Naive thymus-derived CD4-positive, alpha-beta T cell (primary cell): ENCODE measurements at regions of chr2 and their contacts with region 1.

Region 1: GRCh38 chr2:83342860-83343329 is 1116.2 kb downstream of the SUCLG1 start:
- DNase-seq: peak in 6 of 9 donors; percentile 7 to 39 (median 26)
- ATAC-seq: peak; percentile 60
- H3K4me3 ChIP-seq: no peak overlapping the region
- H3K4me3 Mint-ChIP-seq: peak overlapping the region in 3 of 10 donors; percentile 1 to 58 (median 7)
- H3K27ac ChIP-seq: no peak overlapping the region
- H3K27ac Mint-ChIP-seq: peak overlapping the region in 5 of 9 donors; percentile 16 to 84 (median 71)
- H3K4me1 ChIP-seq: no peaks in the 10 kb centered on the region
- H3K4me1 Mint-ChIP-seq: no peaks in the 10 kb centered on the region
- H3K27me3 ChIP-seq: no peaks in the 10 kb centered on the region
- H3K27me3 Mint-ChIP-seq: no peaks in the 10 kb centered on the region

Region 2: GRCh38 chr2:82528288-82528687 is 814.6 kb before region 1 on chr2:
- CTCF ChIA-PET with region 1: no interaction called
- POLR2A ChIA-PET with region 1: no interaction called
- intact Hi-C with region 1: loop called in 1 of 2 experiments (anchors 2 kb)
- DNase-seq: no peak
- ATAC-seq: no peak
- H3K4me3 ChIP-seq: no peak overlapping the region
- H3K4me3 Mint-ChIP-seq: no peak overlapping the region
- H3K27ac ChIP-seq: no peak overlapping the region
- H3K27ac Mint-ChIP-seq: peak overlapping the region in 1 of 9 donors; percentile 32
- H3K4me1 ChIP-seq: no peaks in the 10 kb centered on the region
- H3K4me1 Mint-ChIP-seq: no peaks in the 10 kb centered on the region
- H3K27me3 ChIP-seq: no peaks in the 10 kb centered on the region
- H3K27me3 Mint-ChIP-seq: no peaks in the 10 kb centered on the region